Ascending aorta (tissue), 2 donors: ENCODE measurements at regions of chr10 and their contacts with region 1.

Region 1: DNA sequence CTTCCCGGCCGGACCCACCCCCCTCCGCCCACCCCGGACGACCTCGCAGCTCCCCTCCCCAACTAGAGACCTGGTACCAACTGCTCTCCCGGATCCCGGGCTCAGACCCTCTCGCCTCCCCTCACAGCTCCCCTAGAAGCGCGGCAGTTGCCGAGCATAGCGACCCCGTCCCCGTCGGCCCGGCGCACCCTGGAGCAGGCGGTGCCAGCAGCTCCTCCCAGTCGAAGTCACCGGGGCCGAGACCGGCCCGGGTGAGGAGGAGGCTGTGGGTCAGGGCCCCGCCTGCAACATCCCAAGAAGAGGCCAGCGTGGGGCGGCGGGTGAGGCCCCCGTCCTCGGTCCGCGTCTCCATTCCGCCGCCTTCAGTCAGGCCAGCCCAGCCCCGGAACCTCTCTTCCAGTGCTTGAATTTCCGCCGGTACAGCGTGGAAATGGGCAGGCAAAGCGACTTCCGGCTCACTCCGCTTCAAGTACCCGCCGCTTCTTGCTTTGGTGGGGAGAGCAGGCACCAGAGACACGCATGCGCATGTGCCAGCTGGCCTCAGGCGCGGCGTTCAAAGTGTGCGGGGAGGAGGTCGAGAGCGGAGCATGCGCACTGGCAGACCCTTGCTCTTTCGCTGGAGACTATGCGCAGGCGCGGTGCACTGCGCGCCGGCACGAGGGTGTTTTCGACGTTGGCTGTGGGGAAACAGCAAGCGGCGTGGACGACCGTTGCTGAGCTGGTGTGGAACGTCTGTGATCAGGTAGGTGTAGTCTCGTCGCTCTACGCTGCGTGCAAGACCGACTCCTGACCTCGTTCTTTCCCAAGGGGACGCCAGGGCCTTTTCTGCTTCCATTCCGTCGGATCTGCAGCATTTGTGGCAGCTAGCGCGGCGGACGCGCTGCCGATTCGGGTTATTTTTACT is at the start of gene C10orf88:
- DNase-seq: peak; percentile 88 to 98
- H3K4me3 ChIP-seq: peak within 1 kb of the TSS; percentile 76 to 97
- H3K27ac ChIP-seq: peak within 1 kb of the TSS; percentile 70 to 75
- H3K4me1 ChIP-seq: peaks cover 0 to 5% of the 10 kb centered on the region in 2 donors
- H3K27me3 ChIP-seq: no peaks in the 10 kb centered on the region
- CTCF ChIP-seq: no peak
- total RNA-seq, gene C10orf88: 1.3 TPM

Region 2: DNA sequence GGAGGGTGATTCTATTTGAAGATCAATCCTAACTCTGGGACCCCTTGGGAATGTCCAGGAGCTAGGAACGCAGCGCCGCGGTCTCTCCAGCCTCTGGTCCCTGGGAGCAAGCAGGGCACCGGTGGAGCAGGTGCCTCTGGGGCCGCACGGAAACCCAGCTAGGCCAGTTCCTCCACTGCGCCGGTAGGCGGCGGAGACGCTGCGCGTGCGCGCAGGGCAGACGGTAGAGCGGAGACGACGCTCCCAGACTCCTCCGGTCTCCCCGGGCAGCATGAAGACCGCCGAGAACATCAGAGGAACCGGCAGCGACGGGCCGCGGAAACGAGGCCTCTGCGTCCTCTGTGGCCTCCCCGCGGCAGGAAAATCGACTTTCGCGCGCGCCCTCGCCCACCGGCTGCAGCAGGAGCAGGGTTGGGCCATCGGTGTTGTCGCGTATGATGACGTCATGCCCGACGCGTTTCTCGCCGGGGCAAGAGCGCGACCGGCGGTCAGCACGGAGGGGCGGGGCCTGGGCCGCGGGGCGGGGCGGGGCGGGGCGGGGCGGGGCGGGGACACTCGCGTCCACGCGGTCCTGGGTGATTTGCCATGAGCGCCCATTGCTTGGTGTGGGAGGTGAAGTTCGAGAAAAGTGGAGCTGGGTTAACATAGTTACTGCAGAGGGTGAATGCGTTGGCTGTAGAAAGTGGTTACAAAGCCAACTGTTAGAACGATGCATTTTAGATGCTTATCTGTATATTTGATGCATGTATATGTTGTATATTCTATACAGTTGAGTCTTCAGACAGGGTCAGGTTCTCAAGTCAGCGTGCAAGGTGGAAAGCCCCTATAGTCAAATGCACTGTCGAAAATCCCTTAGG is 26.4 kb after region 1 on chr10 and contains the start of gene PSTK:
- intact Hi-C with region 1: loop called (anchors 1 kb)
- DNase-seq: peak; percentile 31 to 92
- H3K4me3 ChIP-seq: peak within 1 kb of the TSS; percentile 75 to 88
- H3K27ac ChIP-seq: peak within 1 kb of the TSS; percentile 89 to 90
- H3K4me1 ChIP-seq: peaks cover 0 to 2% of the 10 kb centered on the region in 2 donors
- H3K27me3 ChIP-seq: no peaks in the 10 kb centered on the region
- CTCF ChIP-seq: peak; percentile 95 to 98 (median 97)
- total RNA-seq, gene PSTK: not detected

Region 3: DNA sequence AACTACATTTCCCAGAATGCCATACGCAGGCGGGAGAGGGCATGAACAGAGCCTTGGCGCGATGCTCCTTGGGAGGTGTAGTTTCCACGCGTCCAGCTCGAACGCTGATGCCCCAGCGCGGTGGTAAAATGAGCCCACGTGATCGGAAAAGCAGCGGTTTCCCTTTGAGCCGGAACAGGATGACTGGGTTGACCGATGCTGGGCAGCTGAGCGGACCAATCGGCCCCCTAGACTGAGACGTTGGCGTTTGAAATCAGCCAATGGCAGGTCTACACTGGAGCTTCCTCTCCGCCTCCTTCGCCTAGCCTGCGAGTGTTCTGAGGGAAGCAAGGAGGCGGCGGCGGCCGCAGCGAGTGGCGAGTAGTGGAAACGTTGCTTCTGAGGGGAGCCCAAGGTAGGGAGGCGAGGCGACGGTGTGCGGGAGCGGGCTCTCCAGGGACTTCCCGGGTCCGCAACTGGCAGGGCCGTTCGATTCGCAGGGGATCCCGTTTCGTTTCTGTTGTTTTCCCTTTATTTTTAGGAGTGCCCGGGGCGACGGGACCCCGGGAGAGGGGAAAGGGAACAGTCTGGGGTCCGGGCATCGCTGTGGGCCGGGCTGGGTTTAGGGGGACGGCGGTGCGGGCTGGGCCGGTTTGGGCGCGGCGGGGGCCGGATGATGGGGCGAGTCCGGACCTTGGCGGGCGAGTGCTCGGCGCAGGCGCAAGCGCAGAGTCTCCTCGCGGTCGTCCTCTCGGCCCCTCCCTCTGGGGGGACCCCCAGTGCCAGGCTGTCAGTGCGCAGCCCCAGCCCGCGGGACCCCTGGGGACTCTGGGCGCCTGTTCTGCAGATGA is 200.2 kb after region 1 on chr10 and contains the start of gene BUB3:
- intact Hi-C with region 1: loop called (anchors 1 kb)
- DNase-seq: peak; percentile 95 to 99
- H3K4me3 ChIP-seq: peak within 1 kb of the TSS; percentile 74 to 92
- H3K27ac ChIP-seq: peak within 1 kb of the TSS; percentile 75 to 90
- H3K4me1 ChIP-seq: peaks cover 8 to 19% of the 10 kb centered on the region in 2 donors
- H3K27me3 ChIP-seq: peaks cover 16% of the 10 kb centered on the region
- CTCF ChIP-seq: peak in 2 of 3 experiments; percentile 5 to 30
- total RNA-seq, gene BUB3: 12.2 TPM